HCT116 (cell line): ENCODE measurements at regions of chr9 and their contacts with region 1.

Region 1: DNA sequence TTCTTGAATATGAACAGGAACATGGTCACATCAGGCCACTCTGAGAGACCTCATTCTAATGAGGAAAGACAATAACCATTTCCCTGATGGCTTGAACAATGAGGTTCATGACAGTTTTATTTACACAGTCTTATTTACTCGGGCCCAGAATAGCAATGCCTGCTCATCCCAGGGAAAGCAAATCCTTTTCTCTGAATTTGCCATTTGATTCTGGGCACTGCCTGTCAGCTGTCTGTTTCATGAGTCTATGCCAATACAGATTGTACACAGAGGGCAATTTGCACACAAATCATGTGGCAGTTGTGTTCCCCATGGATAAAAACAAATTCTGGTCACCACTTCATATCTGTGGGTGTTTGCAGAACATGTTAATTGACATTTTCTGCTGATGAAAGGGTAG is 492.5 kb downstream of the ACTL7B start:
- DNase-seq: no peak
- ATAC-seq: no peak
- H3K4me3 ChIP-seq: no peak overlapping the region
- H3K27ac ChIP-seq: no peak overlapping the region
- H3K4me1 ChIP-seq: no peaks in the 10 kb centered on the region
- H3K27me3 ChIP-seq: no peaks in the 10 kb centered on the region
- CTCF ChIP-seq: no peak
- POLR2A ChIP-seq: no peak
- RAD21 ChIP-seq: no peak

Region 2: DNA sequence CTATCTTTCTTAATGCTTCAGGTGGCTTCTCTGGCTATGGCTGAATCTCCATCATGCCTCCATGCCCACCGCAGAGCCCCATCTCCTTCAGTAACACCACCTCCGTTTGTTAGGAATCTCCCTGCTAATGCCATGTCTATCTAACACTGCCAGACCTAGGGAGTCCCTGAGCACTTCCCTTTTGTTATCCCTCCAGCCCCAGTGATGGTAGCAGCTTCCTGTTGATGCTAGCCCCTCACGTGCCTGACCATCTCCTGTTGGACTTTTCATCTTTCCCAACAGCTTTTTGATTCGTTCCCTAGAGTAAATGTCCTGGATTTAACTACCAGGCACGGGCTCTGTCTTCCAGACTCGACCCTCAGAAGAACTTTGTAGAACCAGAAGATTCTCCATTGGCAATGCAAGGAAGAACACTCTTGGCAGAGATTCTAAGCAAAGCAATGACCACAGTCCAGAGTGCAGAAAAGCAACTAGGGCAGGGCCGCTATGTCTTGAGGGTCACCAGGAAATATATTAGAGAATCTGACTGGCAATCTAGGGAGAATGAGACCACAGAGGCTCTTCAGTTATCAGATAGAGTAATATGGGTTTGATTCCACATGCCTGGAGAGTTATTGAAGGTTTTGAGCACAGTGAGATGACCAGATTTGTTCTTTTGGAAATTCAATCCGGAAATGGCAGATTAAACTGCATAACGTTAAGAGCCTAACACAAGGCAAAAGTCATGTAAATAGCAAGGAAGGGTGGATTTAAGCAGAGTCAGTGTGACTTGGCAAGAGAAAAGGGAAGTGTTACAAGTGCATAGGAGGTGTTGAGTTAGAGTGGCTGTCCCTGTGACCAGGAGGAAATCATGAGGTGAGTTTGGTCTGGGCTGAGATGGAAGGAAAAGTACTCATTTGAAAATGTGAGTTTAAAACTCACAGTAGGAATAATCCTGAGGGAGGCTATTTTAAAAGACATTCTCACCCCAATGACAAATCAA is 62.7 kb before region 1 on chr9:
- CTCF ChIA-PET with region 1: no interaction called
- POLR2A ChIA-PET with region 1: no interaction called
- RAD21 ChIA-PET with region 1: interaction called in 1 of 2 experiments, 4 read pairs
- intact Hi-C with region 1: loop called (anchors 10 kb)
- DNase-seq: no peak
- ATAC-seq: no peak
- H3K4me3 ChIP-seq: no peak overlapping the region
- H3K27ac ChIP-seq: no peak overlapping the region
- H3K4me1 ChIP-seq: no peaks in the 10 kb centered on the region
- H3K27me3 ChIP-seq: no peaks in the 10 kb centered on the region
- CTCF ChIP-seq: no peak
- POLR2A ChIP-seq: no peak
- RAD21 ChIP-seq: no peak